ENCODE measurements at regions of chr10 and their contacts with region 1.

Region 1: GRCh38 chr10:3785257-3785850 is 345 bp upstream of the KLF6 start:
- DNase-seq: peak; percentile 93
- H3K4me3 ChIP-seq: peak overlapping the region; percentile 70 to 99 (median 82)
- H3K27ac ChIP-seq: peak overlapping the region; percentile 99 to 100 (median 100)
- H3K4me1 ChIP-seq: peaks cover 12 to 31% (median 13%) of the 10 kb centered on the region in 3 donors
- H3K27me3 ChIP-seq: no peaks in the 10 kb centered on the region
- CTCF ChIP-seq: peak in 3 of 6 experiments; percentile 10 to 33 (median 20)
- POLR2A ChIP-seq: peak in 3 of 4 donors; percentile 99 to 100 (median 100)

Region 2: DNA sequence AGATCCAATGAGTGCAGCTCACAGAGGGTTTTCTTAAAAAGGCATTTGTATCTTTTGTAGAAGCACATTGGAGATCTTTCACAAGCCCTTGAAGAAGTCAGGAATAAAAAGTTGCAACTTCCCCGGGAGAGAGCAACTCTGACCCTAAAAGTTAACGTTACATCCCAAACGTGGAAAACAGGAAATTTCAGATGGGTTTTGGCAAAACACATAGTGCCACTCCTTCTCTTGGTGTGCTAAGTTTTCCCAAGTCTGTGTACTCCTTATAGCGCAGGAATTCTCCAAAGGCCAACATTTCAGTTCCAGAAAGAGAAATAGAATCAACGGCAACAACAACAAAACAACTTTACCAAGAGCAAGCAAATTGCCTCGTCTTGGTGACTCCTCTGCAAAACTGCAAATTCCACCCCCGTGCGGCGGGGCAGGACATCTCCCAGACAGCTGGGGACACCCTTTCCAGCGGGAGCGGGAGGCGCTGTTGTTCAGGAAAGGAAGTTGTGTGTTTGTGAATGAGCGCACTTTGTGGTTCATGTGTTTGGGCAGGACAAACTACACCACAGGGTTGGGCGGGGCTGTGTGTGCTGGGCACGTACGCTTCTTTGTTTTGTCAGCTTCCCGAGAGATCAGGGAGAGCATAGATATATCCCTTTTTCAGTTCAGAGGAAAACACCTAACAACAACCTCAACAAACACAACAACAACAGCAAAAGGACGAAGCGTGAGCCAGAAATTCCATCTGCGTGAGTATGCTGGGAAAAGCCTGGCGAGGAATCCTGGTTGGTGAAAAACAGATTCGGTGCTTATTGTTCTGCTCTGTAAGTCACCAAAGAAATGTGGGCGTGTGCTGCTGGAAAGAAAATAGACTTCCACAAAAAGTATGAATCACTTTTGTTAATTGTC is 318.1 kb before region 1 on chr10:
- intact Hi-C with region 1: loop called (anchors 10 kb)
- DNase-seq: no peak
- H3K4me3 ChIP-seq: peak overlapping the region; percentile 23 to 57 (median 30)
- H3K27ac ChIP-seq: peak overlapping the region; percentile 89 to 97 (median 94)
- H3K4me1 ChIP-seq: peaks cover 40 to 82% (median 63%) of the 10 kb centered on the region in 3 donors
- H3K27me3 ChIP-seq: no peaks in the 10 kb centered on the region
- CTCF ChIP-seq: peak in 5 of 6 experiments; percentile 41 to 73 (median 69)
- POLR2A ChIP-seq: no peak

Measured in esophagus squamous epithelium (tissue), 5 donors.